ENCODE measurements at regions of chr9 and their contacts with region 1.

Region 1: DNA sequence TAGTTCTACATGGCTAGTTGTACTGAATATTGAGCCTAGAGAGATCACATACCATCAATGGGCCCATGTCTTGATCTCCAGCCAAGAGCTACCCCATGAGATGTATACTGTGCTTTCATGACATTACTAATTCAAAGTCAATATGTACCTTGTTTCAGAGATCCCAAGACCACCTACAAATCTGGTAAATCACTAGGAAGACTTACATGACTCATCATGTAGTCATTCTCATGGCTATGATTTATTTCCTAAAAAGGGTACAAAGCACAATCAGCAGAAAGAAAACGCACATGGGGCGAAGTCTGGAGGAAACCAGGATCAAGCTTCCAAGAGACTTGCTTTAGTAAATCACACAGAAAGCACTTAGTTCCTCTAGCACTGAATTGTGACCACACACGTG is 103.0 kb downstream of the PCSK5 start:
- DNase-seq: no peak
- ATAC-seq: peak; percentile 24
- H3K4me3 Mint-ChIP-seq: no peak overlapping the region
- H3K27ac Mint-ChIP-seq: no peak overlapping the region
- H3K4me1 Mint-ChIP-seq: peaks cover 53% of the 10 kb centered on the region
- H3K27me3 Mint-ChIP-seq: no peaks in the 10 kb centered on the region

Region 2: DNA sequence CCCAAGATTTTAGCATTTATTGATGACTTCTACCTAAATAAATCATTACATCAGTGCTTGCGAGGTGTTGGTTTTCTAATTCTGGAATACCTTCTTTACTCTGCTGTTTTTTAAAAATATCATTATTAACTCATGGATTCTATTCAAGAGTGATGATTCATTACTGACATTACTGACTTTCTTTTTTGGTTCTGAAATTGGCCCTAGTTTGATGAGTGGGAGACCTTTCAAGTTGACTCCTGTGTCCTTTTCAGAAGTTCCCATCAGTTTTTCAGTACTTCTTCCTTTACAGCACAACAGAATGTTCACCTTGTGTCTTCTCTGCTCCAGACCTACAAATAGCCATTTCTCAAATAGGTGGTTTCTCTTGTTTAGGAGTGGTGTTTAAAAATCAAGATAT is 11.1 kb after region 1 on chr9:
- CTCF ChIA-PET with region 1: no interaction called
- POLR2A ChIA-PET with region 1: no interaction called
- intact Hi-C with region 1: loop called in 1 of 2 experiments (anchors 1 kb)
- DNase-seq: no peak
- ATAC-seq: peak; percentile 73
- H3K4me3 Mint-ChIP-seq: no peak overlapping the region
- H3K27ac Mint-ChIP-seq: peak overlapping the region; percentile 32
- H3K4me1 Mint-ChIP-seq: peaks cover 50% of the 10 kb centered on the region
- H3K27me3 Mint-ChIP-seq: no peaks in the 10 kb centered on the region

Region 3: DNA sequence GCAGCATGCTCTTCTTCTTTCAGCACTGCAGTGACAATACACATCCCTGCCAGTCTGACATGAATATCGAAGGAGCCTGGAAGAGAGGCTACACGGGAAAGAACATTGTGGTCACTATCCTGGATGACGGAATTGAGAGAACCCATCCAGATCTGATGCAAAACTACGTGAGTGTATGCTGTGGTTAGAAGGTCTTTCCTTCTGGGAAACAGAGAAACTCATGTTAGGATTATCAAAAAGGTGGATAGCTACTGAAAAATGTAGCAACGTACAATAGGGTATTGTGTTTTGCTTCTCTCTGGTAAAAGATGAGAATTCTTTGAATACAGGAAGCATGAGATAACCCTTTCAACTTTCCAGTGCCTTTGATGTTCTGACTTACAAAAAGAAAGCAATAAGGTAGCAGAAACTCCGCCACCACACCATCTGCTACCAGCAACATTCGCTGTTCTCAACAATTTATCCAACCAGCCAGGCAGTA is 30.3 kb after region 1 on chr9:
- CTCF ChIA-PET with region 1: no interaction called
- POLR2A ChIA-PET with region 1: no interaction called
- intact Hi-C with region 1: loop called in 1 of 2 experiments (anchors 2 kb)
- DNase-seq: peak; percentile 63
- ATAC-seq: peak; percentile 83
- H3K4me3 Mint-ChIP-seq: peak overlapping the region; percentile 56
- H3K27ac Mint-ChIP-seq: peak overlapping the region; percentile 88
- H3K4me1 Mint-ChIP-seq: peaks cover 89% of the 10 kb centered on the region
- H3K27me3 Mint-ChIP-seq: no peaks in the 10 kb centered on the region

Region 4: GRCh38 chr9:76321205-76321828 is 327.9 kb after region 1 on chr9:
- CTCF ChIA-PET with region 1: no interaction called
- POLR2A ChIA-PET with region 1: no interaction called
- intact Hi-C with region 1: no loop called
- DNase-seq: no peak
- ATAC-seq: no peak
- H3K4me3 Mint-ChIP-seq: no peak overlapping the region
- H3K27ac Mint-ChIP-seq: no peak overlapping the region
- H3K4me1 Mint-ChIP-seq: no peaks in the 10 kb centered on the region
- H3K27me3 Mint-ChIP-seq: peaks cover 3% of the 10 kb centered on the region

Measured in activated CD4-positive, alpha-beta T cell treated with anti-CD3 and anti-CD28 coated beads for 36 hours (primary cell).